Left ventricle myocardium superior (tissue), 1 donor: ENCODE measurements at regions of chr3 and their contacts with region 1.

Region 1: GRCh38 chr3:172673210-172673679 is 37.6 kb downstream of the NCEH1 start:
- DNase-seq: peak; percentile 64
- ATAC-seq: peak; percentile 76

Region 2: DNA sequence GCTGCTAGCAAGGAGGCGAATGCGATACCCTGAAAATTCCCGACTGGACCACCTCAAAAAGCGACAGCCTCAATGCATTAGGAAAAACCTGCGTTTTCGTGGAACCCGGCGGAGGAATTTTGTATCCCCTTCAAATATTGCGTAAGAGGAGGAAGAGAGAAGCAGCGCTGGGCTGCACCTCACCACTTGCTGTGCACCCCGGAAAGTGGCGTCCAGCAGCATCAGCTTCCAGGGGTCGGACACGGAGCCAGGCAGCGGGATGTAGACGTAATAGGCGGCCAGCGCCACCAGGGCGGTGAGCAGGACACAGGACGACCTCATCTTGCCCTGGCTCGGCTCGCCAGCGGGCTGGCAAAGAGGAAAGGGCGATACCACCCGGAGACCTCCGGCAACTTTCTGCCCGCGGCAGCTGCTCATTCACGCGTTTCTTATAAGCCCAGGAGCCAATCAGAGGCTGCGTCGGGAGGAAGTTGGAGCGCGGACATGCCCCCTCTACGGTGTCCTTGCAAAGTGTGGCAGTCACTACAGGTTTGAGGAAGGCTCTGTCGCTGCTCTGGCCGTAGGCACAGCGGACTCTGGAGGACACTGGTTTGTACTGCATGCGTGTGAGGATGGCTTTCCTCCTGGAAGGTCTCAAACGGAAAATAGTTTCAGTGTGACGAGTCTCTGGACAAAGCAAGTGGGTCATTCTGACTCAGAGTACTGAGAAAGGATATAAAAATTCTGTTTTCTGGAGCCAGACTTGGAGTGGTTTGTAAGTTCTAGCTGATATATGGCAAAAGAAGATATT is 37.6 kb after region 1 on chr3 and contains the start of gene NCEH1:
- intact Hi-C with region 1: loop called (anchors 5 kb)
- DNase-seq: peak; percentile 91
- ATAC-seq: peak; percentile 96
- total RNA-seq, gene NCEH1: 63.6 TPM